Calu3 (cell line): ENCODE measurements at regions of chr10 and their contacts with region 1.

Region 1: GRCh38 chr10:101141616-101142532 is 10.8 kb downstream of the TLX1 start:
- DNase-seq: peak; percentile 83
- H3K4me3 Mint-ChIP-seq: no peak overlapping the region
- H3K27ac Mint-ChIP-seq: no peak overlapping the region
- H3K4me1 Mint-ChIP-seq: peaks cover 11% of the 10 kb centered on the region
- H3K27me3 Mint-ChIP-seq: peaks cover 60% of the 10 kb centered on the region
- CTCF ChIP-seq: peak; percentile 72

Region 2: GRCh38 chr10:101095542-101096213 is 46.2 kb before region 1 on chr10:
- CTCF ChIA-PET with region 1: interaction called, 116 read pairs
- intact Hi-C with region 1: loop called (anchors 1 kb)
- DNase-seq: peak; percentile 84
- H3K4me3 Mint-ChIP-seq: no peak overlapping the region
- H3K27ac Mint-ChIP-seq: no peak overlapping the region
- H3K4me1 Mint-ChIP-seq: peaks cover 9% of the 10 kb centered on the region
- H3K27me3 Mint-ChIP-seq: peaks cover 53% of the 10 kb centered on the region
- CTCF ChIP-seq: peak; percentile 65